ENCODE measurements at regions of chr20 and their contacts with region 1.

Region 1: GRCh38 chr20:35619196-35620095 is 3.8 kb downstream of the SPAG4 start:
- DNase-seq: peak; percentile 27 to 42
- ATAC-seq: no peak
- H3K4me3 ChIP-seq: peak overlapping the region; percentile 46 to 71 (median 71)
- H3K27ac ChIP-seq: peak overlapping the region in 3 of 4 donors; percentile 24 to 86 (median 85)
- H3K4me1 ChIP-seq: peaks cover 18 to 32% of the 10 kb centered on the region in 2 donors
- H3K27me3 ChIP-seq: no peaks in the 10 kb centered on the region
- CTCF ChIP-seq: peak in 1 of 5 experiments; percentile 35
- POLR2A ChIP-seq: peak in 1 of 2 donors; percentile 38

Region 2: GRCh38 chr20:35318502-35319157 is 300.8 kb before region 1 on chr20:
- in situ Hi-C with region 1: no loop called
- intact Hi-C with region 1: no loop called
- DNase-seq: peak; percentile 58 to 80
- ATAC-seq: peak; percentile 90 to 96
- H3K4me3 ChIP-seq: no peak overlapping the region
- H3K27ac ChIP-seq: peak overlapping the region; percentile 58 to 72 (median 70)
- H3K4me1 ChIP-seq: peaks cover 11 to 24% of the 10 kb centered on the region in 2 donors
- H3K27me3 ChIP-seq: no peaks in the 10 kb centered on the region
- CTCF ChIP-seq: no peak
- POLR2A ChIP-seq: peak in 1 of 2 donors; percentile 8

Region 3: DNA sequence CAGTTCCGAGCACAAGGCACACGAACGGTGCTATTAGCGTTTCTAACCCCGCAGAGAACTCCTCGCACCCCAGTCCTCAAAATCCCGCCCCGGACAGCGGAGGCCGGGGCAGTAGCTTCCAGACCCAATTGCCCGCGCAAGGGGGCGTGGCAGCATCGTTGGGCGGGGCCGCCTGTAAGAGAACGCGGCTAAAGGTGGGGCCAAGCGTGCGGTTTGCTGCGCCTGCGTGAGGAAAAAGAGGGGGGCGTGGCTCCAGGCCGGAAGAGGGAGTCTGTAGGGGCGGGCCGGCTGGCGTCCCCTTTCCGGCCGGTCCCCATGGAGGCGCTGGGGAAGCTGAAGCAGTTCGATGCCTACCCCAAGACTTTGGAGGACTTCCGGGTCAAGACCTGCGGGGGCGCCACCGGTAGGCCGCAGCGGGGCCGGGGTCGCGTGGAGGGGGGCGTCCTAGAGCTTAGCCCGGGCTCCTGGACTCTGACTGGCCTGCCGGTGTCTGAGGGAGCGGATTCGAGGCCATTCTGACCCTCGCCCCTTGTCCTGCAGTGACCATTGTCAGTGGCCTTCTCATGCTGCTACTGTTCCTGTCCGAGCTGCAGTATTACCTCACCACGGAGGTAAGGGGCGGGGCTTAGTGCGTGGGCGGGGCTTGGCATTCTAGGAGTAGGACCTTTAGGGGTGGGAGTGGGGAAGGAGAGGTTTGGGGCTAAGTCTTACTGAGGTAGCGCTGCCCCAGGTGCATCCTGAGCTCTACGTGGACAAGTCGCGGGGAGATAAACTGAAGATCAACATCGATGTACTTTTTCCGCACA is 77.5 kb before region 1 on chr20 and contains the start of gene ERGIC3:
- in situ Hi-C with region 1: no loop called
- intact Hi-C with region 1: loop called (anchors 2 kb)
- DNase-seq: peak; percentile 94 to 96
- ATAC-seq: peak; percentile 99
- H3K4me3 ChIP-seq: peak within 1 kb of the TSS; percentile 69 to 88 (median 82)
- H3K27ac ChIP-seq: peak within 1 kb of the TSS; percentile 65 to 85 (median 77)
- H3K4me1 ChIP-seq: peaks cover 0 to 12% of the 10 kb centered on the region in 2 donors
- H3K27me3 ChIP-seq: no peaks in the 10 kb centered on the region
- CTCF ChIP-seq: peak in 1 of 5 experiments; percentile 26
- POLR2A ChIP-seq: peak in 1 of 2 donors; percentile 29
- total RNA-seq, gene ERGIC3: 82.5 to 91.0 (median 89.2) TPM

Region 4: GRCh38 chr20:35664544-35665221 is 45.2 kb after region 1 on chr20 and contains the starts of genes CPNE1 and RBM12:
- in situ Hi-C with region 1: no loop called
- intact Hi-C with region 1: loop called (anchors 1 kb)
- DNase-seq: peak; percentile 87 to 90
- ATAC-seq: peak; percentile 93 to 95
- H3K4me3 ChIP-seq: peak within 1 kb of the TSS; percentile 73 to 97 (median 74)
- H3K27ac ChIP-seq: peak within 1 kb of the TSS; percentile 93 to 98 (median 98)
- H3K4me1 ChIP-seq: peaks cover 35 to 41% of the 10 kb centered on the region in 2 donors
- H3K27me3 ChIP-seq: no peaks in the 10 kb centered on the region
- CTCF ChIP-seq: no peak
- POLR2A ChIP-seq: peak; percentile 91 to 92
- total RNA-seq, gene CPNE1: 37.3 to 60.7 (median 50.1) TPM
- total RNA-seq, gene RBM12: 9.8 to 23.7 (median 20.7) TPM

Region 5: DNA sequence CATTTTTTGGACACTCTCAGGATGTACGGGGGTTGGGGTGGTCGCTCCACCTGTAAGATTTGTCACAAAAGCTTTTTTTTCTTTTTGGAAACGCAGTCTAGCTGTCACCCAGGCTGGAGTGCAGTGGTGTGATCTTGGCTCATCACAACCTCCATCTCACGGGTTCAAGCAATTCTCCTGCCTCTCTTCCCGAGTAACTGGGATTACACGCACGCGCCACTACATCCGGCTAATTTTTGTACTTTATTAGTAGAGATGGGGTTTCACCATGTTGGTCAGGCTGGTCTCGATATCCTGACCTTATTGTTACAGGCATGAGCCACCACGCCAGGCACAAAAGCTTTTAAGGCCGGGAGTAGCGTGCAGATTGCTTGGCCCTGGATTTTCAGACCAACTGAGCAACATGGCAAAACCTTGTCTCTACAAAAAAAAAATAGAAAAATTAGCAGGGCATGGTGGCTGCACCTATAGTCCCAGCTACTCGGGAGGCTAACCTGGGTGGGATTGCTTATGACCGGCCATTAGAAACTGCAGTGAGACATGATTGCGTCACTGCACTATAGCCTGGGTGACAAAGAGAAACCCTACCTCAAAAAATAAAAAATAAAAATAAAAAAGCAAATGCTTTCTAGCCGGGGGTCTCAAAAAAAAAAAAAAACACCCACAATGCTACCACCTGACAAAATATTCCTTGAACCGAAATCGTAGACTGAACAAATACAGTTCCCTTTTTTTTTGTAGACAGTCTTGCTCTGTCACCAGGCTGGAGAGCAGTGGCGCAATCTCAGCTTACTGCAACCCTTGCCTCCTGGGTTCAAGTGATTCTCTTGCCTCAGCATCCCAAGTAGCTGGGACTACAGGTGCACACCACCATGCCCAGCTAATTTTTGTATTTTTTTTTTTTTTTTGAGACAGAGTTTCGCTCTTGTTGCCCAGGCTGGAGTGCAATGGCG is 107.6 kb after region 1 on chr20:
- in situ Hi-C with region 1: no loop called
- intact Hi-C with region 1: no loop called
- DNase-seq: no peak
- ATAC-seq: no peak
- H3K4me3 ChIP-seq: no peak overlapping the region
- H3K27ac ChIP-seq: peak overlapping the region in 1 of 4 donors; percentile 8
- H3K4me1 ChIP-seq: peaks cover 31 to 37% of the 10 kb centered on the region in 2 donors
- H3K27me3 ChIP-seq: no peaks in the 10 kb centered on the region
- CTCF ChIP-seq: no peak
- POLR2A ChIP-seq: no peak

Measured in gastrocnemius medialis (tissue), 4 donors.